ENCODE measurements at regions of chr18 and their contacts with region 1.

Region 1: GRCh38 chr18:32261003-32261402 is 71.2 kb downstream of the MEP1B start:
- DNase-seq: no peak
- ATAC-seq: no peak
- H3K4me3 ChIP-seq: no peak overlapping the region
- H3K4me1 ChIP-seq: peaks cover 5% of the 10 kb centered on the region
- CTCF ChIP-seq: no peak

Region 2: GRCh38 chr18:31977270-31977872 is 283.6 kb before region 1 on chr18:
- intact Hi-C with region 1: no loop called
- DNase-seq: peak in 1 of 3 donors; percentile 17
- ATAC-seq: peak; percentile 40
- H3K4me3 ChIP-seq: no peak overlapping the region
- H3K4me1 ChIP-seq: no peaks in the 10 kb centered on the region
- CTCF ChIP-seq: peak; percentile 32

Region 3: GRCh38 chr18:32167975-32168730 is 92.8 kb before region 1 on chr18:
- intact Hi-C with region 1: loop called in 1 of 2 experiments (anchors 10 kb)
- DNase-seq: no peak
- ATAC-seq: peak; percentile 71
- H3K4me3 ChIP-seq: no peak overlapping the region
- H3K4me1 ChIP-seq: no peaks in the 10 kb centered on the region
- CTCF ChIP-seq: no peak